Sigmoid colon (tissue), 7 donors: ENCODE measurements at regions of chr4 and their contacts with region 1.

Region 1: DNA sequence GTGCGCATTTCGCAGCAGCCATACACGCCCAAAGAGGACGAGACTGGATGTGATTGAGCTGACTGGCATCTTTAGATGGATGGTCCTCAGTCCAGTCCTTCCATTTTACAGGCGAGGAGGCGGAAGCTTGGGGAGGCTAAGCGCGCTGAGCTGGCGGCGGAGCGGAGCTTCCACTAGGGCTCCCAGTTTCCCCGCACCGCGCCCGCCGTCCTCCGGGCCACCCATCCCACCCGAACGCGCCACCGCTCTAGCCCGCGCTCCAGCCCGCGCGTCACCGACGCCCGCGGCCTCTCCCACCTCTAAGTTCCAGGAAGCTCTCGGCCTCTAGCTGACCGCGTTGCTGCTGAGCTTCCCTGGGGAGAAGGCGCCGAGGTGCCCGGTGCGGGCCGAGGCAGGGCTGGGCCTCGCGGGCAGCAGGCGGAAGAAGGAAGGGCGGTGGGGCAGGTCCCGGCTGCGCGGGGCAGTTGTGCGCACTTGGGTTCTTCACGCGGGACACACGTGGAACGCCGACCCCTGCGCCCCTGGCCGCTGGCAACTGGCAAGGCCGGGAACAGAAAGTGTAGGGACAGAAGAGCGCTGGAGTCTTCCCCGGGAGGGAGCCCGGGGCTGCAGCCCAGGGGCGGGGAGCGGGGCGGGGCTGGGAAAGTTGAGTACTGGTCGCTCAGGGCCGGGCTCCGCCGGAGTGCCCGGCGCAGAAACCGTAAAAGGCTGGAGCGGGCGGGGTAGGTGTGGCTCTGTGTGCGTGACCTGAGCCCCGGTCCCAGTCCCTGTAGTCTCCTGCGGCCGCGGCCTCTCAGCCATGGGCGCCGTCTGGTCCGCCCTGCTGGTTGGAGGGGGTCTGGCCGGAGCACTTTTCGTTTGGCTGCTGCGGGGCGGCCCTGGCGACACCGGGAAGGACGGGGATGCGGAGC is at the start of gene STBD1:
- DNase-seq: peak; percentile 89
- H3K4me3 ChIP-seq: peak within 1 kb of the TSS; percentile 68 to 87 (median 77)
- H3K27ac ChIP-seq: peak within 1 kb of the TSS; percentile 84 to 95 (median 91)
- H3K4me1 ChIP-seq: peaks cover 0 to 53% (median 36%) of the 10 kb centered on the region in 4 donors
- H3K27me3 ChIP-seq: no peaks in the 10 kb centered on the region
- CTCF ChIP-seq: no peak
- EP300 ChIP-seq: no peak
- POLR2A ChIP-seq: peak; percentile 10 to 27
- total RNA-seq, gene STBD1: 11.0 to 17.1 (median 15.3) TPM

Region 2: DNA sequence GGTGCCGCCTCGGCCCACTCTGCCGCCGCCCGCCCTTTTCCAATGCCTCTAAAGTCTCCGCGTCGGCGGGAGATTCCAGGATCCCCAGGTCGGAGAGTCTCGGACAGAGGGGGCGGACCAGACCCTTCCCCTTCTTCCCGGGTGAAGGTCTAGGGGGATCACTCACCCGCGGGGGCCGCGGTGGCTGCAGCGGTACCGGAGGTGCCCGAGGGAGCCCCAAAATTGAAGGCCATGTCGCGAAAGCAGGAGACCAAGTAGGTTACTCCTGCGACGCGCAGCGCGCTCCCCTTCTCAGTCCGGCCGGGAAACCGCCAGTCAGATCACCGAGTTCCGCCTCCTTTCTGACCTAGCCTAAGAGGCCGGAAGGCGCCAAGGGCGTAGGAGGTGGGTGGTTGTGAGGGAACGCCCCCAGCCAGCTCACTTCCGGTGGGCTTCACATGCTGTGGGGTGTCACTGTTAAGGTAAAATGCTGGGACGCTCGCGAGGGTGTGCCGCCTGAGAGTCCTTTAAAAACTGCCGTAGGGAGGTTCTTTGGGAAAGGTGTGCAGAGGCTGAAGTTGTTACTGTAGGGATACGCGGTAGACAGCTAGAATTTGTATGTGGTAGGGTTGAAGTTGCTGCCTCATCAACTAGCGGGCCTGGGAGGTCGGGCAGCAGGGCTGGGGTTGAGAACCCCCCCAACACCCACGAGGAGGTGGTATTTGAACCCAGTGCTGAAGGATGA is 157.9 kb before region 1 on chr4 and contains the start of gene NUP54:
- intact Hi-C with region 1: loop called (anchors 10 kb)
- DNase-seq: peak; percentile 96
- H3K4me3 ChIP-seq: peak within 1 kb of the TSS; percentile 70 to 94 (median 79)
- H3K27ac ChIP-seq: peak within 1 kb of the TSS; percentile 91 to 94 (median 92)
- H3K4me1 ChIP-seq: peaks cover 0 to 34% (median 32%) of the 10 kb centered on the region in 4 donors
- H3K27me3 ChIP-seq: no peaks in the 10 kb centered on the region
- CTCF ChIP-seq: no peak
- EP300 ChIP-seq: peak in 1 of 4 donors; percentile 22
- POLR2A ChIP-seq: peak; percentile 81 to 83
- total RNA-seq, gene NUP54: 38.0 to 57.9 (median 48.1) TPM

Region 3: GRCh38 chr4:76179398-76180318 is 126.6 kb before region 1 on chr4:
- intact Hi-C with region 1: loop called (anchors 1 kb)
- DNase-seq: peak; percentile 92
- H3K4me3 ChIP-seq: no peak overlapping the region
- H3K27ac ChIP-seq: peak overlapping the region in 2 of 4 donors; percentile 34 to 37
- H3K4me1 ChIP-seq: peaks cover 0 to 17% (median 9%) of the 10 kb centered on the region in 4 donors
- H3K27me3 ChIP-seq: no peaks in the 10 kb centered on the region
- CTCF ChIP-seq: peak; percentile 71 to 96 (median 82)
- EP300 ChIP-seq: no peak
- POLR2A ChIP-seq: no peak

Region 4: DNA sequence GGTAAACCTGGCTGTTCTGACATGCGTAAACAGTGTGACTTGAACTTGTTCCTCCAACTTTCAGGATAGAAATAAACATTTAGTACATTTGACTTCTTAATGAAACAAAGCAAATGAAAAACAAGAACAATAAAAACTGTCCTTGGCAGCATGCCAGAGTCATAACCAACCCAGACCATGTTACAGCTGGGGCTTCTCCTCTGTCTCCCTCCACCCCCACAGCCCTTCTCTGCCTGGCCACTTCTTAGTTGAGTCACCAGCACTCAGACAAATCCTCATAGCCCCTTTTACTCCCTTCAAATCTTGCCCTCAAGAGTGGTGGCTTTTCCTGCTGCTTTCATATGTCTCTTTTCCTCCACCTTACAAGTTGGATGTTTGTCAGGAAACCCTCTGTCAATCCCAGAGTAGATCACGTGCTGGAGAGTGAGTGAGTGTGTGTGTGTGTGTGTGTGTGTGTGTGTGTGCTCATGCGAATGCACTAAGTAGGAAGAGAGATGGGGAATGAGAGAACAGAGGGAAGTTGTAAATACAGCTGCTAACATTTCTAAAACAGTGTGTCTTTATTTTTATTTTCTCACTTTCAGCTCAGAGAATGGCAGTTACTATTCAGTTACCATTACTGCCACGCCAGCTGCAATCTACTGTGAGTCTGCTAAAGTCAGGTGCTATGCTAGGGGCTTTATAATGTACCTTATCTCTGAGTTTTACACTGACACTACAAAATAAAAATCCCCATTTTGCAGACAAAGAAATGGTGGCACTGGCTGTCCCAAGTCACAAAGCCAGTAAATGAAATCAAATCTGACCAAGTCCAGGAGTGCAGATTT is 107.6 kb before region 1 on chr4:
- intact Hi-C with region 1: loop called (anchors 5 kb)
- DNase-seq: peak; percentile 94
- H3K4me3 ChIP-seq: peak overlapping the region in 1 of 4 donors; percentile 11
- H3K27ac ChIP-seq: peak overlapping the region; percentile 75 to 86 (median 82)
- H3K4me1 ChIP-seq: peaks cover 0 to 98% (median 89%) of the 10 kb centered on the region in 4 donors
- H3K27me3 ChIP-seq: no peaks in the 10 kb centered on the region
- CTCF ChIP-seq: no peak
- EP300 ChIP-seq: peak in 1 of 4 donors; percentile 32
- POLR2A ChIP-seq: no peak

Region 5: DNA sequence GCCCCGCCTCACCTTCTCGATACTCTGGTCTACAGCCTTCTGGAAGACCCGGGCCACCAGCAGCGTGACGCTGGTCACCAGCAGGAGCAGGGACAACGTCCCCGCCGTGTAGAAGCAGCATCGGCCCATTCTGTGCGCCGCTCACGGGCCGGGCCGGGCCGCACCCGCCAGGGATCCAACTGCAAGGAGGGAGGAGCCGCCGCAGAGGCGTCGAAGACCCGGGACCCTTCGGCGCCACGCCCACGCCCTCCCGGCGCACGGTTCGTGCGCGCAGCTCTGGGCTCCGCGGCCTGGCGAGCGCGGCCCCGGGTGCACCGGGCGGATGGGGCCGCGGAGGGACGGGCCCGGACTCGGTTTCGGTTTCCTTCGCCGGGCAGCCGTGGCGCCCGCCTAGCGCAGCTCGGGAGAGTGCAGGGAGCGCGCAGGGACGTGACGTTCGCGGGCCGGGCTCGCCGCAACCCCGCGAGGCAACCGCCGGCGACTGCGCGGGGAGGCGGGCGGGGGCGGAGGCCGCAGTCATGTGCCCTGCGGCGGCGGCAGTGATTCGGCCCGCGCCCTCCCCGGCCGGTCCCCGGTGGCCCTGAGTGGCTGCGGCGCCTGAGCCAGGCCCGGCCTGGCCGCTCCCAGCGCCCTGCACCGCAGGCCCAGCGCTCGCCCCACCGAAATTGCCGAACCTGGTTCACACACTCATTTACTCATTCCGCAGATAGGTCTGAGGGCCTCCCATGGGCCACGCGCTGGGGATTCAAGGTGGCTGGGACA is 92.6 kb before region 1 on chr4 and contains the start of gene SCARB2:
- intact Hi-C with region 1: loop called (anchors 1 kb)
- DNase-seq: peak; percentile 95
- H3K4me3 ChIP-seq: peak within 1 kb of the TSS; percentile 61 to 79 (median 73)
- H3K27ac ChIP-seq: peak within 1 kb of the TSS; percentile 93 to 99 (median 96)
- H3K4me1 ChIP-seq: peaks cover 0 to 57% (median 51%) of the 10 kb centered on the region in 4 donors
- H3K27me3 ChIP-seq: no peaks in the 10 kb centered on the region
- CTCF ChIP-seq: no peak
- EP300 ChIP-seq: no peak
- POLR2A ChIP-seq: peak; percentile 24 to 58
- total RNA-seq, gene SCARB2: 119 to 160 (median 141) TPM

Region 6: DNA sequence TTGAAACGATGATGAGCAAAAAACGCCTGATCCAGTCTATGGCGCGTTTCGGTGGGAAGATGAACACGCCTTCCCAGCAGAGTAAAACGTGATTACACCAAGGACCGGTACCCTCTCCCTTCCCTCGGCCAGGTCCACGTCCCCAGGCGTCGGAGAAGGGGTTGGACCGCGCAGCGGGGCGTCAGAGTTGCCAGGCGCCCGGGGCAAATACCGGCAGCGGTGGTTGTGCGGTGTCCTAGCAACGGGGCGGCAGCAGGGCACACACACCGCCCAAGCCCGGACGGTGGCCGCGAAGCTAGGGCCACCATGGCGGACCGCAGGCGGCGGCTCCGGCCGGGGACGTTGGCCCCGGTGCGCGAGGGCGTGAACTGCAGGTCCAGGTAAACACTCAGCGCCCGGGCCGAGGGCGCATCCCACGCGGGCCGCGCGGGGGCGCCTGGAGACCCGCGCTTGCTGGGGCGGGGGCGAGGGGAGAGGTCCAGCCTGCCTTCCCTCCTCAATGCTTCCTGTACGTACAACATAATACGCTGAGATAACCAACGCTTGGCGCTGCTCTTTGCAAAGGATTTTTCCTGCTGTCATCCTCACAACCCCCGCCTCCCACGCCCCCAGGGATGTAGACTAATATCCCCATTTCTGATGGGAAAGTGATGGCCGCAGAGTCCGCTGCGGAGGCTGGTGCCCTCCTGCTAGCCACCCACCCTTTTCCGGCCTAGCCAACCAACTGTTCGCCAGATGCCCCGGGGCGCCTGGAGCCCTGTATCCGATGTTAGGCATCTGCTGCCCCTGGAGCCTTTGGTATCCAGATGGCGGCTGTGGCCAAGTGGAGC is 54.6 kb before region 1 on chr4 and contains the start of gene FAM47E:
- intact Hi-C with region 1: loop called (anchors 2 kb)
- DNase-seq: peak; percentile 88
- H3K4me3 ChIP-seq: peak within 1 kb of the TSS; percentile 45 to 81 (median 56)
- H3K27ac ChIP-seq: peak within 1 kb of the TSS; percentile 10 to 46 (median 18)
- H3K4me1 ChIP-seq: peaks cover 0 to 16% (median 7%) of the 10 kb centered on the region in 4 donors
- H3K27me3 ChIP-seq: no peaks in the 10 kb centered on the region
- CTCF ChIP-seq: peak in 1 of 4 experiments; percentile 37
- EP300 ChIP-seq: no peak
- POLR2A ChIP-seq: no peak
- total RNA-seq, gene FAM47E: 1.7 to 3.3 (median 2.0) TPM

Region 7: GRCh38 chr4:76420762-76421581 is 114.7 kb after region 1 on chr4 and contains the start of gene CCDC158:
- intact Hi-C with region 1: loop called (anchors 10 kb)
- DNase-seq: no peak
- H3K4me3 ChIP-seq: peak within 1 kb of the TSS; percentile 36 to 59 (median 57)
- H3K27ac ChIP-seq: peak within 1 kb of the TSS in 3 of 4 donors; percentile 4 to 47 (median 24)
- H3K4me1 ChIP-seq: peaks cover 0 to 17% (median 14%) of the 10 kb centered on the region in 4 donors
- H3K27me3 ChIP-seq: peaks cover 0 to 3% (median 0%) of the 10 kb centered on the region in 3 donors
- CTCF ChIP-seq: no peak
- EP300 ChIP-seq: no peak
- POLR2A ChIP-seq: no peak
- total RNA-seq, gene CCDC158: 0.41 to 1.7 (median 0.82) TPM in 3 of 4 donors, not detected in the other

Region 8: GRCh38 chr4:76535603-76536367 is 229.6 kb after region 1 on chr4:
- intact Hi-C with region 1: no loop called
- DNase-seq: no peak
- H3K4me3 ChIP-seq: no peak overlapping the region
- H3K27ac ChIP-seq: no peak overlapping the region
- H3K4me1 ChIP-seq: peaks cover 0 to 13% (median 3%) of the 10 kb centered on the region in 4 donors
- H3K27me3 ChIP-seq: no peaks in the 10 kb centered on the region
- CTCF ChIP-seq: no peak
- EP300 ChIP-seq: no peak
- POLR2A ChIP-seq: no peak